Common myeloid progenitor, CD34-positive (primary cell): ENCODE measurements at regions of chr19 and their contacts with region 1.

Region 1: GRCh38 chr19:8355631-8356402 is 8.1 kb upstream of the ANGPTL4 start:
- DNase-seq: no peak
- H3K4me3 ChIP-seq: no peak overlapping the region
- H3K27ac ChIP-seq: no peak overlapping the region
- H3K4me1 ChIP-seq: peaks cover 0 to 3% (median 0%) of the 10 kb centered on the region in 4 experiments
- H3K27me3 ChIP-seq: peaks cover 0 to 28% (median 3%) of the 10 kb centered on the region in 5 experiments

Region 2: GRCh38 chr19:8240274-8241229 is 115.3 kb before region 1 on chr19:
- CTCF ChIA-PET with region 1: no interaction called
- POLR2A ChIA-PET with region 1: no interaction called
- DNase-seq: peak; percentile 96 to 99 (median 98)
- H3K4me3 ChIP-seq: peak overlapping the region in 4 of 7 experiments; percentile 5 to 48 (median 38)
- H3K27ac ChIP-seq: no peak overlapping the region
- H3K4me1 ChIP-seq: peaks cover 0 to 46% (median 38%) of the 10 kb centered on the region in 4 experiments
- H3K27me3 ChIP-seq: no peaks in the 10 kb centered on the region

Region 3: DNA sequence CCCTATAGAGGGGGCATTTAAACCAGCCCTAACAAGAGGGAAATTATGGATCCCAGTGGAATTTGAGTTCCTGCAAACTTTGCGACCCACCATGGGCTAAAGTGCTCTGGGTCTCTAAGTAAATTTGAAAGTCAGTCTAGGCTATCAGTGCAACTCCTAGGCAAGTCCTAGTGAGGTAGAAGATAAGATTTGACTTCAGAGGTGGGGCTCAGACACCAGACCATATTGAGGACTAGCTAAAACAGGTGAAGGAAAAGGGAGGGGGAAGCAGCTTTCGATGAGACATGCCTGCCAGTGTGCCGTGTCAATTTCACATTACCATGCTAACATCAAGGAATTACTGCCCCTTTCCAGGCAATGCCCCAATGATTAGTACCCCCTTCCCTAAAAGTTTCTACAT is 86.1 kb before region 1 on chr19:
- CTCF ChIA-PET with region 1: no interaction called
- POLR2A ChIA-PET with region 1: no interaction called
- DNase-seq: no peak
- H3K4me3 ChIP-seq: no peak overlapping the region
- H3K27ac ChIP-seq: no peak overlapping the region
- H3K4me1 ChIP-seq: peaks cover 0 to 7% (median 4%) of the 10 kb centered on the region in 4 experiments
- H3K27me3 ChIP-seq: peaks cover 0 to 2% (median 0%) of the 10 kb centered on the region in 5 experiments

Region 4: GRCh38 chr19:8334458-8335342 is 21.1 kb before region 1 on chr19:
- CTCF ChIA-PET with region 1: interaction called, 15 read pairs
- POLR2A ChIA-PET with region 1: no interaction called
- DNase-seq: peak in 2 of 3 donors; percentile 50 to 52
- H3K4me3 ChIP-seq: peak overlapping the region in 6 of 7 experiments; percentile 40 to 60 (median 48)
- H3K27ac ChIP-seq: no peak overlapping the region
- H3K4me1 ChIP-seq: peaks cover 0 to 26% (median 15%) of the 10 kb centered on the region in 4 experiments
- H3K27me3 ChIP-seq: peaks cover 0 to 77% (median 39%) of the 10 kb centered on the region in 5 experiments

Region 5: GRCh38 chr19:8370176-8371010 is 14.6 kb after region 1 on chr19:
- CTCF ChIA-PET with region 1: interaction called, 21 read pairs
- POLR2A ChIA-PET with region 1: no interaction called
- DNase-seq: no peak
- H3K4me3 ChIP-seq: no peak overlapping the region
- H3K27ac ChIP-seq: no peak overlapping the region
- H3K4me1 ChIP-seq: peaks cover 0 to 24% (median 20%) of the 10 kb centered on the region in 4 experiments
- H3K27me3 ChIP-seq: peaks cover 0 to 28% (median 12%) of the 10 kb centered on the region in 5 experiments

Region 6: GRCh38 chr19:8389891-8390616 is 34.2 kb after region 1 on chr19 and contains the start of gene RAB11B:
- CTCF ChIA-PET with region 1: interaction called, 29 read pairs
- POLR2A ChIA-PET with region 1: interaction called, 4 read pairs
- DNase-seq: peak; percentile 100
- H3K4me3 ChIP-seq: peak within 1 kb of the TSS; percentile 82 to 100 (median 92)
- H3K27ac ChIP-seq: peak within 1 kb of the TSS; percentile 92 to 94
- H3K4me1 ChIP-seq: peaks cover 0 to 27% (median 17%) of the 10 kb centered on the region in 4 experiments
- H3K27me3 ChIP-seq: no peaks in the 10 kb centered on the region

Region 7: DNA sequence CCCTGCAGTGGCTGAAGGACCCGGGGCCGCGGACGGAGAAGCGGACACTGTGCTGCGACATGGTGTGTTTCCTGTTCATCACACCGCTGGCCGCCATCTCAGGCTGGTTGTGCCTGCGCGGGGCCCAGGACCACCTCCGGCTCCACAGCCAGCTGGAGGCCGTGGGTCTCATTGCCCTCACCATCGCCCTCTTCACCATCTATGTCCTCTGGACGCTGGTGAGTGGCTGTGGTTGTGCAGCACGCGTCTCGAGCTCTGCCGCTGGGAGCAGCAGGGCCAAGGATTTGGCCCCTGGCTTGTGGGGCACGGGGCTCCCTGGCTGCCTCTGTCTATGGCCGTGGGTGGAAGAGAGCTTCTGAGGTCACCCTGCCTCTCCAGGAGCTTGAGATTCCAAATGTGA is 74.8 kb after region 1 on chr19:
- CTCF ChIA-PET with region 1: no interaction called
- POLR2A ChIA-PET with region 1: no interaction called
- DNase-seq: no peak
- H3K4me3 ChIP-seq: no peak overlapping the region
- H3K27ac ChIP-seq: no peak overlapping the region
- H3K4me1 ChIP-seq: peaks cover 0 to 10% (median 3%) of the 10 kb centered on the region in 4 experiments
- H3K27me3 ChIP-seq: no peaks in the 10 kb centered on the region

Region 8: DNA sequence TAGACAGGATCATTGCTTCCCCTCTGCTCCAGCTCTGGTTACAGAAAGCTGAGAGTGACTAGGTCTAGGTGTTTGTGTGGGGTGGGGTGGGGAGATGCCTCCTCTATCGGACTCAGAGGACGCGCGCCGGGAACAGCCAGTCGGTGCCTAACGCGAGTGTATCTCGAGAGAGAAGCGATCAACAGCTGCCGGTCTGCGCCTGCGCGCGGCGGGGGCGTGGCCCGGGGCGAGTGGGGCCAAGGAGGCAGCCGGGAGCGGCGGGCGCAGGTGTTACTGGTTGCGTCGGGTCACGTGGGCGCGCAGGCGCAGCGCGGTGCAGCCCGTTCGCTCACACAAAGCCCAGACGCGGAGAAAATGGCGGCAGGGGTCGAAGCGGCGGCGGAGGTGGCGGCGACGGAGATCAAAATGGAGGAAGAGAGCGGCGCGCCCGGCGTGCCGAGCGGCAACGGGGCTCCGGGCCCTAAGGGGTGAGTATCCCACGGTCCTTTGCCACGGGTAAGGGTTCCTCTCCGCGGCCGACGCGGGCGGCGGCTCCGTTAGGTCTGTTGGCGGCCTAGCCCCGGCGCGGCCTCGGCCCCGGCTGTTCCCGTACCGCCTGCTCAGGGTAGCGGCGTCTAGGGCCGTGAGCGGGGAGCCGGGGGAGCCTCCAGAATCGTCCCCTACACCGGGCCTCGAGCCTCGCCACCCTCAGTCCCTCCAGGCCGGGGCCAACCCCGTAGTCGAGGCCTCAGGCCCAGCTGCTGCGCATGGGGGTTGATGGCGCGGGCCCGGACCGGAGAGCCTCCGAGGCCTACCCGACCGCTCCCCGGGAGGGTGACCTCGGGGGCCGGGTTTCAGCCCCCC is 89.0 kb after region 1 on chr19 and contains the start of gene HNRNPM:
- CTCF ChIA-PET with region 1: interaction called, 14 read pairs
- POLR2A ChIA-PET with region 1: no interaction called
- DNase-seq: peak; percentile 97 to 99 (median 98)
- H3K4me3 ChIP-seq: peak within 1 kb of the TSS; percentile 83 to 97 (median 93)
- H3K27ac ChIP-seq: peak within 1 kb of the TSS; percentile 97 to 98
- H3K4me1 ChIP-seq: peaks cover 22 to 44% (median 34%) of the 10 kb centered on the region in 4 experiments
- H3K27me3 ChIP-seq: no peaks in the 10 kb centered on the region

Region 9: GRCh38 chr19:8846819-8847218 is 491.0 kb after region 1 on chr19:
- CTCF ChIA-PET with region 1: no interaction called
- POLR2A ChIA-PET with region 1: no interaction called
- DNase-seq: no peak
- H3K4me3 ChIP-seq: no peak overlapping the region
- H3K27ac ChIP-seq: no peak overlapping the region
- H3K4me1 ChIP-seq: no peaks in the 10 kb centered on the region
- H3K27me3 ChIP-seq: peaks cover 0 to 1% (median 0%) of the 10 kb centered on the region in 5 experiments